ENCODE measurements at regions of chr3 and their contacts with region 1.

Region 1: GRCh38 chr3:69051756-69052471 is at the start of gene TMF1:
- DNase-seq: peak; percentile 100
- H3K4me3 ChIP-seq: peak within 1 kb of the TSS; percentile 65 to 83 (median 75)
- H3K27ac ChIP-seq: peak within 1 kb of the TSS; percentile 89 to 95 (median 91)
- H3K4me1 ChIP-seq: peaks cover 10 to 50% (median 38%) of the 10 kb centered on the region in 4 donors
- H3K27me3 ChIP-seq: no peaks in the 10 kb centered on the region
- CTCF ChIP-seq: no peak
- EP300 ChIP-seq: no peak
- POLR2A ChIP-seq: peak; percentile 68
- total RNA-seq, gene TMF1: 23.0 to 35.8 (median 33.9) TPM

Region 2: DNA sequence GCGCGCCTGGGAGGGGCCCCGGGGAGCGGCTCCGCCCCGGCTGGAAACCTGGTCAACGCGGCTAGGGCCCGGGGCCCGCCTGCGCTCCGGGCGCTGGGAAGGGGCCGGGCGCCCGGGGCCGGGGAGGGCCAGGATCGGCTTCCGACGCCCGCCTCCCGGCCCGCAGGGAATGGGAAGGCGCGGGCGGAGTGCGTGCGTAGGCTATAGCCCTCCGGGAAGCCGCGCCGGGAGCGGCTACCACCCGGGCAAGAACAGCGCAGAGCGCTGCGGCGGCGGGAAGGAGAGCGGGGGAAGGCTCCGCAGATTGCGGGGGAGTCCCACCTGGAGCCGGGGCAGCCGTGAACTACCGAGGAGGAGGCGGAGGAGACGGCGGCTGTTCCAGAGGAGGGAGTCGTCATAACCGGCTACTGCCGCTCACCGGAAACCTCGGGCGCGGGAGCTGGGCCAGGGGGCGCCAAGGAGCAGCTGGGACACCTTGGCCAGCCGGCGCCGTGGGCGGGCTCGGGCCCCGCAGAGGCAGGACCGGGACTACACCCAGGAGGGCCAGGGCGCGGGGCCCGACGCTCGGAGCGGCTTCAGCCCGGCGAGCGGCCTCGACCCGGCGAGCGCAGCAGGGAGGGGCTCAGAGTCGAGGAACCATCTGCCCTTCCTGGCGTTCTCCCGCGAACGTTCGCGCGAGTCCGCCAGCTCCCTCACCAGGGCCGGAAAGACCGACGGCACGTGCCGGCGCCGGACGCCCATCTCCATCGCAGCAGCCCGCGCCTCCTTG is 38.5 kb before region 1 on chr3 and contains the start of gene EOGT:
- intact Hi-C with region 1: loop called (anchors 5 kb)
- DNase-seq: peak; percentile 94
- H3K4me3 ChIP-seq: peak within 1 kb of the TSS; percentile 84 to 87 (median 86)
- H3K27ac ChIP-seq: peak within 1 kb of the TSS; percentile 98 to 99 (median 98)
- H3K4me1 ChIP-seq: peaks cover 31 to 64% (median 56%) of the 10 kb centered on the region in 4 donors
- H3K27me3 ChIP-seq: no peaks in the 10 kb centered on the region
- CTCF ChIP-seq: peak; percentile 42 to 58 (median 46)
- EP300 ChIP-seq: peak; percentile 10
- POLR2A ChIP-seq: no peak
- total RNA-seq, gene EOGT: 96.5 to 129 (median 111) TPM

Region 3: GRCh38 chr3:69084326-69085167 is 32.6 kb after region 1 on chr3 and contains the start of gene ARL6IP5:
- intact Hi-C with region 1: loop called (anchors 5 kb)
- DNase-seq: peak; percentile 99
- H3K4me3 ChIP-seq: peak within 1 kb of the TSS; percentile 77 to 93 (median 86)
- H3K27ac ChIP-seq: peak within 1 kb of the TSS; percentile 90 to 95 (median 93)
- H3K4me1 ChIP-seq: peaks cover 66 to 78% (median 71%) of the 10 kb centered on the region in 4 donors
- H3K27me3 ChIP-seq: no peaks in the 10 kb centered on the region
- CTCF ChIP-seq: no peak
- EP300 ChIP-seq: no peak
- POLR2A ChIP-seq: peak; percentile 17
- total RNA-seq, gene ARL6IP5: 100 to 142 (median 110) TPM

Region 4: DNA sequence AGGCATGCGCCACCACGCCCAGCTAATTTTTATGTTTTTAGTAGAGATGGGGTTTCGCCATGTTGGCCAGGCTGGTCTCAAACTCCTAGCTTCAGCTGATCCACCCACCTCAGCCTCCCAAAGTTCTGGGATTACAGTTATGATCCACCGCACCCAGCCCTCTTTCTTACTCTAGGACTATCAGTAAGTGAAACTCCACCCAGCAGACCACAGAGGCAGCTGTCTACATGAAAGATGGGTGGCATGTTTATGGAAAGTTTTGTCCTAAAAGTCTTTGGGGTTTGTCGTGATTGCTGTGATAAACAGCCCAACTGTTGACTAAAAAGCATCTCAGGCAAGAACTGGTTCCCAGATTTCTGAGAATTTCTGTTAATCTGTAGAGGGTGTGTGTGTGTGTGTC is 43.7 kb after region 1 on chr3:
- intact Hi-C with region 1: loop called (anchors 2 kb)
- DNase-seq: no peak
- H3K4me3 ChIP-seq: no peak overlapping the region
- H3K27ac ChIP-seq: peak overlapping the region; percentile 58 to 95 (median 76)
- H3K4me1 ChIP-seq: peaks cover 70 to 96% (median 93%) of the 10 kb centered on the region in 4 donors
- H3K27me3 ChIP-seq: no peaks in the 10 kb centered on the region
- CTCF ChIP-seq: no peak
- EP300 ChIP-seq: no peak
- POLR2A ChIP-seq: no peak

Region 5: DNA sequence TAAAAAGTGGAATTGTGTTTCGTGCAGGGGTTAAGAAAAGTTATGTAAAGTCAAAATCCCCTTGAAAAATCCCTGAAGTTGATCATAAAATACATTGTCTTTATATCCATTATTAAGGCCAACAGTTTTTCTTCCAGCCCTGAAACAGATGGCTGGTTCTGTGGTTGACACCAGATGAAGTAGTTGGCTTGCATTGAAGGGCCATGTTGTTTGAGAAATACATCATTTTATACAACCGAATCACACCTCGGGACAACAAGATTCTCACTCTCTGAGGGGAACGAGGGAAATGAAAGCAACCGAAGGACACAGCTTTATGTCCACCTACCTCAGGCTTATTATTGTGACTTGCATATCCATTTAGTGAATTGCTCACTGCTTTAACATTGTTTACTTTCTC is 561.4 kb after region 1 on chr3:
- intact Hi-C with region 1: no loop called
- DNase-seq: no peak
- H3K4me3 ChIP-seq: no peak overlapping the region
- H3K27ac ChIP-seq: no peak overlapping the region
- H3K4me1 ChIP-seq: peaks cover 0 to 5% (median 2%) of the 10 kb centered on the region in 4 donors
- H3K27me3 ChIP-seq: no peaks in the 10 kb centered on the region
- CTCF ChIP-seq: no peak
- EP300 ChIP-seq: no peak
- POLR2A ChIP-seq: no peak